Endothelial cell of umbilical vein (primary cell): ENCODE measurements at regions of chr3 and their contacts with region 1.

Region 1: DNA sequence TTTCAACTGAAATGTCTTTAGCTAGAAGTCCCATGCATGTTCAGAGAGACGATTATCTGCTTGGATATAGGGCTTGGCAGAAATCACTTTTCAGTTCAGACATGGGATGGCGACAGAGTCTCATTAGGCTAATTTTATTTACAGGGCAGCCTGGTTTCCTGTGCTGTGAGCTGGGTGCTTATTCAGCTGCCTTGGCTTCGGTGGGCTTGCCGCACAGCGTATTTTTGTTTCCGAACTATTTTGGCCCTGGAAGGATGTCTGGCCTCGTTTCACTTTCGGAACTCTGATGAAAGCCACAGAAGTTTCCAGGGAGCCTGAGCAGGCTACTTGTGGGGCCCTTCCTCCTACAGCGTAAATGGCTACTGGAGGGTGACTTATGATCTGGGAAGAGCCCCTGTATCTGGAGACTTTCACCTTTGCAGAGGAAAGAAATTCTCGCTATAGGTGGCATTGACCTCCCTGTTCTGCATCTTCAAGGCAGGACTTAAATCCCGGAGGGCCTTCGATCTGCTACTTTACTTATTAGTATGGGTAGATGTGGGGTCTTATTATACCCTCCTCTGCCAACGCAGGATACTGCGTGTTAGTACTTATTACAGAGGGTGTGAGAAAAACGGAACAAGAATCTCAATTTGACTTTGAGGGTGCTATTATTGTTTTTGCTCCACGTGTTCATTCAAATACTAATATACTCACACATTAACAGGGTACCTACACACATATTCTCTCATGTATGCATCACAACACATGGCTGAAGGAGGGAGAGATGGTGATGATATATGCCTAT is 364.0 kb upstream of the RBMS3 start:
- DNase-seq: peak; percentile 96
- H3K4me3 ChIP-seq: peak overlapping the region; percentile 3 to 73 (median 45)
- H3K27ac ChIP-seq: peak overlapping the region; percentile 57
- H3K4me1 ChIP-seq: peaks cover 9% of the 10 kb centered on the region
- H3K27me3 ChIP-seq: no peaks in the 10 kb centered on the region
- CTCF ChIP-seq: peak; percentile 65 to 71
- POLR2A ChIP-seq: no peak

Region 2: DNA sequence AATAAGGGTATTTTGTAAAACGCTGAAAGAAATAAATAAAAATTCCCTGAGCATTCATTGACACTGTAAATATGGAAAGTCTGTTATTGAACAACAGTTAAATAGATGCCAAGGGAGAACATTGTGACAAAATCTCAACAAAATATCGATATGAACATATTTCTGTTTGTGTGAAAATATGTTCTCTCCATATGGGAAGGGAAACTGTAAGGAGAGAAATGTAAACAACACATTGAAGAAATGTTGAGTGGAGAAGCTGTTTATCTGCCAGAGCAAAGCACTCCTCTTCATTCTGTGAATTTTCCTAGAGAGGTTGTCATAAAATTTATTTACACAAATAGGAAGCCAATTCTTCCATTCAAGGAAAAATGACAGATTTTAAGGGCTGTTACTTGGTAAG is 1137.7 kb before region 1 on chr3:
- CTCF ChIA-PET with region 1: no interaction called
- POLR2A ChIA-PET with region 1: no interaction called
- dilution Hi-C with region 1: no loop called
- intact Hi-C with region 1: no loop called
- DNase-seq: no peak
- H3K4me3 ChIP-seq: no peak overlapping the region
- H3K27ac ChIP-seq: no peak overlapping the region
- H3K4me1 ChIP-seq: no peaks in the 10 kb centered on the region
- H3K27me3 ChIP-seq: no peaks in the 10 kb centered on the region
- CTCF ChIP-seq: no peak
- POLR2A ChIP-seq: no peak

Region 3: DNA sequence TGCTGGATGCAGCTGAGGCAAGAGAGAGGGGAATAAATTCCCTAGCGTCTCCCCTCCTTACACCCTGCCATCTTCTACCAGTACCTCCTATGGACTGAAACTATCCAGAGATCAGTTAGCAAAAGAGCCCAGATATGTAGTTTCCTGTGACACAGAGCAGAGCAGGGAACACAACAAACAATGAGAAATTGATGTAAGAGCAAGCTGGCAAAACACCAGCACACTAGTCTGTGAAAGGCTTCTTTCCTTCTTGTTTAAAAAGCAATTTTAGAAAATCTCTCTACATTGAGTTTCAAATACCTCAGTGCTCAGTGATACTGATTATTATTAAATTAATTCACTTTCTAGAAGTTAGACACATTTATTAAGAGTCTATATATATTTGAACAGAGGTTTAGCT is 352.7 kb before region 1 on chr3:
- CTCF ChIA-PET with region 1: no interaction called
- POLR2A ChIA-PET with region 1: no interaction called
- dilution Hi-C with region 1: no loop called
- intact Hi-C with region 1: no loop called
- DNase-seq: no peak
- H3K4me3 ChIP-seq: no peak overlapping the region
- H3K27ac ChIP-seq: no peak overlapping the region
- H3K4me1 ChIP-seq: no peaks in the 10 kb centered on the region
- H3K27me3 ChIP-seq: no peaks in the 10 kb centered on the region
- CTCF ChIP-seq: no peak
- POLR2A ChIP-seq: no peak

Region 4: DNA sequence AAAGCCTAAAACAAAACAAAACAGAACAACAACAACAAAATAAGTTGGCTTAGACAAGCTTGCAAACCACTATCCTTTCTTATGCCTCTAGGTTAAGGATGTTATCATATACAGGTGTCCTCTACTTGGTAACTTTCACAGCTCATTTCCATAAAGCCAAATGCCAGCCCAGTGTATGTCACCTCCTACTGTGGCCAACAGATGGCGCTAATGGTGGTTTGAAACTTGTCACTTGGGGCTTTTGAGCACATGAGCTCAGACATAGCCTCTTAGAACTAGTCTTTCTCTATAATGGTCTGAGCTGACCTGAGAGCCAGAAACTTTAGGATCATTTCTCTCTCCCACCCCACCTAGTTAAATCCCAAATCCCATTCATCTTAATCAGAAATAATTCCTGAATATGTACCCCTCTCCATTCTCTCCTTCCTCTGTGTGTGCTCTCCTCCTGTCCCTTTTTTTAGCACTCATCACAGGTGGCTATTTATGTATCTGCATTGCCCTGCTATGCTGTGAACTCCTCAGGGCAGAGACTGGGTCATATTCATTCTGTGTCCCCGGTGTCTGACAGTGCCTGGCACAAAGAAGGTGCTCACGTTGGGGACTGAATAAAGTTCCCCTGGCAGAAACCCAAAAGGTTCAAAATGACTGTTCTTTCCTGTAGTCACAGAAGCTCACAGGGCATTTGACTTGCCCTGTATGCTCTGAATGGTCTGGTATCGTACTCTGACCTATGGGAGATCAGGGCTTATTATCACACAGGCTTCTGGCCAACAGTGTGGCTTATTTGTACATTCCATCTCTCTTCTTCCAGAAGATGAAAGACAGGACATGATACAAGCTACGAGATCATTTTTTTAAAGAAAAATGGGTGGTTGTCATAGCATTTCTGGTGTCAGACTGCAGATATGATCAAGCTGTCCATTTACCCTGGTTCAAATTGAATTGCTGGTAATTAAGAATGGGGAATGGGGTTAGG is 249.0 kb before region 1 on chr3:
- CTCF ChIA-PET with region 1: interaction called, 24 read pairs
- POLR2A ChIA-PET with region 1: no interaction called
- dilution Hi-C with region 1: no loop called
- intact Hi-C with region 1: loop called (anchors 5 kb)
- DNase-seq: peak; percentile 79
- H3K4me3 ChIP-seq: no peak overlapping the region
- H3K27ac ChIP-seq: no peak overlapping the region
- H3K4me1 ChIP-seq: no peaks in the 10 kb centered on the region
- H3K27me3 ChIP-seq: peaks cover 0 to 4% of the 10 kb centered on the region in 2 experiments
- CTCF ChIP-seq: peak; percentile 79 to 87
- POLR2A ChIP-seq: no peak

Region 5: DNA sequence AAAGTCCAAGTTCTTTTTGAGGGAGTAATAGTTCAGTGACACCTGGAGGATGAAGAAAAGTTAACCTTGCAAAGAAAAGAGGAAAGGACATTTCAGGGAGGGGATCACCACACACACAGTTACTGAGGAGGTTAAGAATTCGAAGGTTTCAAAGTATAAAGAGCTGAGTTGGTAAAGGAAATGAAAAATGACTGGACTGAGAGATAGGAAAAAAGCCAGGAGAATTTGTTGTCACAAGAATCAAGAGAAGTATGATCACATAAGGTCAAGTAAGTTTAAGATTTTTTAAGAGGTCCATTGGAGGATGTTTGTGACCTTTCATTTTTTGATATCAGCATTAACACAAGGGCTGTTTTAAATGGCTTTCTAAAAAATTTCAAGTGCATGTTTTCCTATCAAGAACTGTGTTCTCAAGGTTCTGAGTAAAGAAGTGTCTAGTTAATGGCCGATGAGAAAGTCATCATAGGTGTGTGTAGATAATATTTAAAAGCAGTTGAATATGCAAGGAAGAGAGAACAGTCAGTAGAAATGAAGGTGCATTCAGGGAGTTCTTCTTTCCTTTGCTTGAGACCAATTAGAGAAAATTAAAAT is 174.8 kb after region 1 on chr3:
- CTCF ChIA-PET with region 1: interaction called, 4 read pairs
- POLR2A ChIA-PET with region 1: no interaction called
- dilution Hi-C with region 1: no loop called
- intact Hi-C with region 1: loop called (anchors 1 kb)
- DNase-seq: peak; percentile 94
- H3K4me3 ChIP-seq: no peak overlapping the region
- H3K27ac ChIP-seq: peak overlapping the region; percentile 49
- H3K4me1 ChIP-seq: peaks cover 16% of the 10 kb centered on the region
- H3K27me3 ChIP-seq: no peaks in the 10 kb centered on the region
- CTCF ChIP-seq: no peak
- POLR2A ChIP-seq: no peak

Region 6: GRCh38 chr3:29255854-29256696 is 339.2 kb after region 1 on chr3:
- CTCF ChIA-PET with region 1: no interaction called
- POLR2A ChIA-PET with region 1: no interaction called
- dilution Hi-C with region 1: no loop called
- intact Hi-C with region 1: no loop called
- DNase-seq: no peak
- H3K4me3 ChIP-seq: no peak overlapping the region
- H3K27ac ChIP-seq: no peak overlapping the region
- H3K4me1 ChIP-seq: no peaks in the 10 kb centered on the region
- H3K27me3 ChIP-seq: no peaks in the 10 kb centered on the region
- CTCF ChIP-seq: no peak
- POLR2A ChIP-seq: no peak

Region 7: GRCh38 chr3:29324180-29324651 is 407.3 kb after region 1 on chr3:
- CTCF ChIA-PET with region 1: interaction called, 12 read pairs
- POLR2A ChIA-PET with region 1: no interaction called
- dilution Hi-C with region 1: no loop called
- intact Hi-C with region 1: loop called (anchors 1 kb)
- DNase-seq: peak; percentile 98
- H3K4me3 ChIP-seq: peak overlapping the region in 2 of 3 experiments; percentile 22 to 49
- H3K27ac ChIP-seq: peak overlapping the region; percentile 98
- H3K4me1 ChIP-seq: peaks cover 22% of the 10 kb centered on the region
- H3K27me3 ChIP-seq: no peaks in the 10 kb centered on the region
- CTCF ChIP-seq: no peak
- POLR2A ChIP-seq: peak; percentile 69

Region 8: GRCh38 chr3:29440413-29441305 is 523.8 kb after region 1 on chr3:
- CTCF ChIA-PET with region 1: no interaction called
- POLR2A ChIA-PET with region 1: no interaction called
- dilution Hi-C with region 1: no loop called
- intact Hi-C with region 1: loop called (anchors 5 kb)
- DNase-seq: peak; percentile 59
- H3K4me3 ChIP-seq: peak overlapping the region in 2 of 3 experiments; percentile 21 to 27
- H3K27ac ChIP-seq: peak overlapping the region; percentile 21
- H3K4me1 ChIP-seq: peaks cover 13% of the 10 kb centered on the region
- H3K27me3 ChIP-seq: no peaks in the 10 kb centered on the region
- CTCF ChIP-seq: no peak
- POLR2A ChIP-seq: no peak

Region 9: DNA sequence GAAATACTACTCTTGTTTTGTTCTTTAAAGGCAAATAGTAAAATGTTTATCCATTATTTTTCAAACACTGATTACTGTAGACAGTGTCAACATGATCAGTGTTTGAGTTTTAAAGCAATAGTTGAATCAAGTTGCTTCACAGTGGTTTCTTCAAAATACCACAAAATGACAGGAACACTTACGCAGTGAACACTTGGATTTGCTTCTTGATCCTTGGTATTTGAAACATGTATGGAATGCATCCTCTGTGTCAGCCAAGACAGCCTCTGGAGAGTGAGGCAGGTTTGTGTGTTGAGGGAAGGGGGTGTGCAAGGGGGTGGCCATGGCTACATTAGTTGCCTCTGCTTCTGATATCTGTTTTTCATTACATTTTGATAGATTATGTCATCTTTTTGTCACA is 777.0 kb after region 1 on chr3:
- CTCF ChIA-PET with region 1: interaction called, 3 read pairs
- POLR2A ChIA-PET with region 1: no interaction called
- dilution Hi-C with region 1: no loop called
- intact Hi-C with region 1: loop called (anchors 1 kb)
- DNase-seq: peak; percentile 78
- H3K4me3 ChIP-seq: no peak overlapping the region
- H3K27ac ChIP-seq: peak overlapping the region; percentile 98
- H3K4me1 ChIP-seq: peaks cover 34% of the 10 kb centered on the region
- H3K27me3 ChIP-seq: no peaks in the 10 kb centered on the region
- CTCF ChIP-seq: no peak
- POLR2A ChIP-seq: no peak

Region 10: GRCh38 chr3:30012941-30013543 is 1096.1 kb after region 1 on chr3:
- CTCF ChIA-PET with region 1: interaction called, 39 read pairs
- POLR2A ChIA-PET with region 1: no interaction called
- dilution Hi-C with region 1: no loop called
- intact Hi-C with region 1: loop called (anchors 2 kb)
- DNase-seq: peak; percentile 76
- H3K4me3 ChIP-seq: no peak overlapping the region
- H3K27ac ChIP-seq: no peak overlapping the region
- H3K4me1 ChIP-seq: peaks cover 5% of the 10 kb centered on the region
- H3K27me3 ChIP-seq: no peaks in the 10 kb centered on the region
- CTCF ChIP-seq: peak; percentile 55 to 56
- POLR2A ChIP-seq: no peak